ENCODE measurements at regions of chr1 and their contacts with region 1.

Region 1: DNA sequence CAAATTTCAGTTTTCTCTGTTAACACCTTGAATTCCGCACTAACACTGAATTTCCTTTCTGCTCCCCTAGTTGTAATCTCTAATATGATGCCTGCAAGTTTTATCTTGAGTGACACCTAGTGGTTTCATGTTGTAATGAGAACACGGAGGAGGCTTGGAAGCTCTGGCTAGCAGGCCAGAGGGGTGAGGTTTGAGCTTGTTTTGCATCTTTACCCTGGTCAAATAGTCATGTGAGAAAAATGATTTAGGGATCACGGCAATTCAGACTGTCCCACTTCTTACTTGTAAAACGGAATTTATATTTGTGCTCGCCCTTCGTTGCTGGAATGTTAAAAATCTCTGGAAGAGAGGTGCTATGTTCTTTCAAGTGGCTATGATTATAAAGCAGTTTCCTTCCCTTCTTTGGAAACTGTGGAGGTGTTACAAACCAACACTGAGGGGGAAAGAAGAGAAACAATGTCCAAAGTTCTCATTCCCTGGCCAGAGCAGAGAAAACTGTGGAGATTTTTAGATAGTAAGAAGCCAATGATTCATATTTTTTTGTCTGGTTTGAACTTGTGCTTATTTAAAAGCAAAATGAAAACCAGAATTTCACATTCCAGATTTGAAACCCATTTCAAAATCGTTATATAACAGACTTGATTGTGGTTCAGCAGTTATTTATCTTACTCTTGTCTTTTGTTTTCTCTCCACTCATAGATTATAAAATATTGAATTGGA is 5.3 kb upstream of the MROH9 start:
- DNase-seq: peak; percentile 33
- H3K4me3 ChIP-seq: no peak overlapping the region
- H3K27ac ChIP-seq: no peak overlapping the region
- H3K27me3 ChIP-seq: no peaks in the 10 kb centered on the region
- CTCF ChIP-seq: peak; percentile 75

Region 2: DNA sequence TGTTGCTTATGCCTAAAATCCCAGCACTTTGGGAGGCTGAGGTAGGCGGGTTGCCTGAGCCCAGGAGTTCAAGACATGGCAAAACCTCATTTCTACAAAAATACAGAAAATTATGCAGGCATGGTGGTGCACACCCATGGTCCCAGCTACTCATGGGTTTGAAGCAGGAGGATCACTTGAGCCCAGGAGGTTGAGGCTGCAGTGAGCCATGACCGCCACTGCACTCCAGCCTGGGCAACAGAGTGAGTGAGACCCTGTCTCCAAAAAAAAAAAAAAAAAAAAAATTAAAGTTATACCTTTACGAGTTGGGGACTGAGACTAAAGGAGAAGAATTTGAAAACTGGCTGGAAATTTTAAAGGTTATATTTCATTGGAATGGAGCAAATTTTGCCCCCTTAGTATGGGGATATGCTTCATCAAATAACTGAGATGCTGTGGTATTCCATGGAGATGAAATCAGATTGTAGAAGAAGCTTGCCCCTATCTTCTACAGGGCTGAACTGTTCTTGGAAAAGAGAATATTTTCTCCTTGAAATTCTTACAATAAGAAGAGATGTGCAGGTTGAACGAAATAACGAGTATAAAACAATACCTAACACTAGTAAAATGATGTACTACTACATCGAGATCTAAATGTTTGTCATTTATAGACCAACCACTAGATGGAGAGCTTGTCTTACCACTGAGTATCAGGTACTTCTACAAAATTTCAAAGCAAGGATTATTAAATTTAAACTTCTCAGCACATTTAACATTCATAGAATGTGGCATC is 1001.4 kb before region 1 on chr1:
- CTCF ChIA-PET with region 1: interaction called, 11 read pairs
- POLR2A ChIA-PET with region 1: no interaction called
- DNase-seq: peak; percentile 16
- H3K4me3 ChIP-seq: no peak overlapping the region
- H3K27ac ChIP-seq: no peak overlapping the region
- H3K27me3 ChIP-seq: no peaks in the 10 kb centered on the region
- CTCF ChIP-seq: peak; percentile 75